Activated CD8-positive, alpha-beta T cell treated with anti-CD3 and anti-CD28 coated beads, Interleukin-2, amount 10 ng/mL, durations not matched to agents 7 days and 5 days (primary cell): ENCODE measurements at regions of chr12 and their contacts with region 1.

Region 1: GRCh38 chr12:121626087-121626852 is at the start of gene ORAI1:
- DNase-seq: peak; percentile 96
- ATAC-seq: peak; percentile 76
- H3K4me3 Mint-ChIP-seq: peak within 1 kb of the TSS; percentile 95
- H3K27ac Mint-ChIP-seq: peak within 1 kb of the TSS; percentile 94
- H3K4me1 Mint-ChIP-seq: peaks cover 42% of the 10 kb centered on the region
- H3K27me3 Mint-ChIP-seq: no peaks in the 10 kb centered on the region
- total RNA-seq, gene ORAI1: 67.4 to 69.6 TPM

Region 2: DNA sequence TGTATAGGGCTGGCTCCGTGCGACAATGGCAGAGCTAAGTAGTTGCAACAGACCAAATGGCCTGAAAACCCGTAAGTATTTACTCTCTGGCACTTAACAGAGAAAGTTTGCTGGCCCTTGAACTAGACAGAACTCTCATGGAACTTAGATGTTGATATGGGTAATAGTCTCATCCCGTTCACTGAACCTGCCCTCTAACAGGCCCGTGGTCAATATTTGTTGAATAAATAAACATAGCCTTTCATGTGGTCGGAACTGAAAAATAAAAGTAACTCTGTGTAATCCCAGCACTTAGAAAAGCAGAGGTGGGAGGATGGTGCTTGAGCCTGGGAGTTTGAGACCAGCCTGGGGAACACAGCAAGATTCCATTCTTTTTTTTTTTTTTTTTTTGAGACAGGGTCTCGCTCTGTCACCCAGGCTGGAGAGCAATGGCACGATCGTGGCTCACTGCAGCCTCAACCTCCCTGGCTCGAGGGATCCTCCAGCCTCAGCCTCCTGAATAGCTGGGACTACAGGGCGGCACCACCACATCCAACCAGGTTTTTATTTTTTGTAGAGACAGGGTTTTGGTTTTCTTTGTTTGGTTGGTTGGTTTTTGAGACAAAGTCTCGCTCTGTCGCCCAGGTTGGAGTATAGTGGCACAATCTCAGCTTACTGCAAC is 75.2 kb before region 1 on chr12:
- CTCF ChIA-PET with region 1: interaction called, 57 read pairs
- POLR2A ChIA-PET with region 1: interaction called, 6 read pairs
- DNase-seq: no peak
- ATAC-seq: no peak
- H3K4me3 Mint-ChIP-seq: no peak overlapping the region
- H3K27ac Mint-ChIP-seq: no peak overlapping the region
- H3K4me1 Mint-ChIP-seq: peaks cover 17% of the 10 kb centered on the region
- H3K27me3 Mint-ChIP-seq: no peaks in the 10 kb centered on the region

Region 3: GRCh38 chr12:121590476-121591143 is 35.7 kb before region 1 on chr12:
- CTCF ChIA-PET with region 1: interaction called, 7 read pairs
- POLR2A ChIA-PET with region 1: interaction called, 18 read pairs
- DNase-seq: peak; percentile 77
- ATAC-seq: peak; percentile 82
- H3K4me3 Mint-ChIP-seq: peak overlapping the region; percentile 75
- H3K27ac Mint-ChIP-seq: peak overlapping the region; percentile 98
- H3K4me1 Mint-ChIP-seq: peaks cover 40% of the 10 kb centered on the region
- H3K27me3 Mint-ChIP-seq: no peaks in the 10 kb centered on the region

Region 4: GRCh38 chr12:121649819-121650353 is 23.6 kb after region 1 on chr12:
- CTCF ChIA-PET with region 1: interaction called, 8 read pairs
- POLR2A ChIA-PET with region 1: interaction called, 25 read pairs
- DNase-seq: peak; percentile 64
- ATAC-seq: peak; percentile 75
- H3K4me3 Mint-ChIP-seq: peak overlapping the region; percentile 27
- H3K27ac Mint-ChIP-seq: peak overlapping the region; percentile 75
- H3K4me1 Mint-ChIP-seq: peaks cover 42% of the 10 kb centered on the region
- H3K27me3 Mint-ChIP-seq: no peaks in the 10 kb centered on the region

Region 5: DNA sequence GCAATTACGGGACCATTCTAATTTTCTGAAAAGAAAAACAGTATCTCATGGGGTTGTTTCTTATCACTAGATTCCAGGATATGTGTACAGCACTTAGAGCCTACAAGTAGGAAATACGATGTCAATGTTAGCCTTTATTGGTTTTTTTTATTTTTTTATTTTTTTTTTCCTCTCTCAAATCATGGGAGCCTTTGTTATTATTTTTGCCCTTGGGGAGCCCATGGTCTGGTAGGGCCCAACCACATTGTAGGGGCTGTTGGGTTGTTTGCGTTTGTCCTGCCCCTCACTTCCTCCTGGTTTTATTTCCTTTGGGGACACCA is 37.3 kb after region 1 on chr12:
- CTCF ChIA-PET with region 1: interaction called, 98 read pairs
- POLR2A ChIA-PET with region 1: interaction called, 24 read pairs
- DNase-seq: no peak
- ATAC-seq: no peak
- H3K4me3 Mint-ChIP-seq: peak overlapping the region; percentile 95
- H3K27ac Mint-ChIP-seq: peak overlapping the region; percentile 95
- H3K4me1 Mint-ChIP-seq: peaks cover 90% of the 10 kb centered on the region
- H3K27me3 Mint-ChIP-seq: no peaks in the 10 kb centered on the region